H1 (cell line): ENCODE measurements at regions of chr4 and their contacts with region 1.

Region 1: DNA sequence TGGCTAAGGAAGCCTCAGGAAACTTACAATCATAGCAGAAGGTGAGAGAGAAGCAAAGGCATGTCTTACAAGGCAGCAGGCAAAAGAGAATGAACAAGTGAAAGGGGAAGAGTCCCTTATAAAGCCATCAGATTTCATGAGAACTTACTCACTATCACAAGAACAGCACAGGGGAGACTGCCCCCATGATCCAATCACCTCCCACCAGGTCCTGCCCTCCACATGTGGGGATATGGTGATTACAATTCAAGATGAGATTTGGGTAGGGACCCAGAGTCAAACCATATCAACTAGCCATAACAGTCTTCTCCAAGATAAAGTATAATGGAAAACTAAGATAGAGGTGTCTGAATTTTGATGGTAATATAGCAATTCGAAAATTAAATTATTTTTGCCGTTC is 534.3 kb downstream of the ADGRL3 start:
- DNase-seq: no peak
- H3K4me3 ChIP-seq: no peak overlapping the region
- H3K27ac ChIP-seq: no peak overlapping the region
- H3K4me1 ChIP-seq: no peaks in the 10 kb centered on the region
- H3K27me3 ChIP-seq: no peaks in the 10 kb centered on the region
- CTCF ChIP-seq: no peak
- EP300 ChIP-seq: no peak
- POLR2A ChIP-seq: no peak
- RAD21 ChIP-seq: no peak

Region 2: DNA sequence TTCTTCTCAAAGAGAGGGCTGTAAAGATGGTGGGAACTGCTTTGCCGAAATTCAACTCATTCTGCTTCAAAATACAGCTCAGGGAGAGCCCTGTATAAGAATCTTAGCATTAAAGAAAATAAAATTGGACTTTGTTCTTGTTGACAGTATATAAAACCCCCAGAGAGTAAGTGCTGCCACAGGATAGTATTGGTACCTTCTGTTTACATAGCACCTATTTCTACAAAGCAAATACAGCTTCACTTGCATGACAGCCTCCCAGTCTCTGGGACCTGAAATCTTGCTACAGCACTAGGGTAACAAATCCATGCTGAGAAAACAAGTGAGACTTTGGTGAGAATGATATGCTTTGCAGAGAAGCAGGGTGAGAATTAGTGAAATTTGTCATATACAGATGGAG is 105.7 kb before region 1 on chr4:
- CTCF ChIA-PET with region 1: no interaction called
- POLR2A ChIA-PET with region 1: no interaction called
- DNase-seq: no peak
- H3K4me3 ChIP-seq: no peak overlapping the region
- H3K27ac ChIP-seq: no peak overlapping the region
- H3K4me1 ChIP-seq: no peaks in the 10 kb centered on the region
- H3K27me3 ChIP-seq: peaks cover 0 to 1% (median 0%) of the 10 kb centered on the region in 4 experiments; a peak in 1 of 7 replicates
- CTCF ChIP-seq: no peak
- EP300 ChIP-seq: no peak
- POLR2A ChIP-seq: no peak
- RAD21 ChIP-seq: no peak

Region 3: GRCh38 chr4:61723492-61723891 is 10.9 kb before region 1 on chr4:
- CTCF ChIA-PET with region 1: no interaction called
- POLR2A ChIA-PET with region 1: interaction called, 10 read pairs
- DNase-seq: no peak
- H3K4me3 ChIP-seq: peak overlapping the region in 1 of 4 experiments; percentile 41; a peak in 1 of 8 replicates
- H3K27ac ChIP-seq: no peak overlapping the region
- H3K4me1 ChIP-seq: peaks cover 3 to 17% (median 6%) of the 10 kb centered on the region in 4 experiments; a peak in 5 of 7 replicates
- H3K27me3 ChIP-seq: no peaks in the 10 kb centered on the region
- CTCF ChIP-seq: no peak
- EP300 ChIP-seq: 0 out of 3 replicates have a peak, but pooled peaks of 1 of the 2 experiments have one; percentile 10
- POLR2A ChIP-seq: no peak
- RAD21 ChIP-seq: no peak